ENCODE measurements at regions of chr19 and their contacts with region 1.

Region 1: DNA sequence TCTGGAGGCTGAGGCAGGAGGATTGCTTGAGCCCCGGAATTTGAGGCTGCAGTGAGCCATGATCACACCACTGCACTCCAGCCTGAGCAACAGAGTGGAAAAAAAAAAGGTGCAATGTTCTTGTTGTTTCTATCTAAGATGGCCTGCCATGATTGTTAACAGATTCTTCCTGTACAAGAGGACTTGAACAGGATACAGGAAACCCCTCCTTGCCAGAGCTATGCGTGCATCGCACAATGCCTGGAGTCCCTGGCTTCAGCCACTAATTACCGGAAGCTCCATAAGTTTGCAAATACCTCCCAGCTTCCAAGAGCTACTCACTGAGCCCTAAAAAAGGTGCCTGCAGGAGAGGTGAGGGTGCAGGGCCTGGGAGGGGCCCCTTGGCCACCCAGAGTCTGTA is 13.1 kb upstream of the HIF3A start:
- DNase-seq: no peak
- H3K4me3 ChIP-seq: no peak overlapping the region
- H3K27ac ChIP-seq: peak overlapping the region in 2 of 4 donors; percentile 51 to 55
- H3K4me1 ChIP-seq: peaks cover 0 to 4% (median under 1%) of the 10 kb centered on the region in 4 donors
- H3K27me3 ChIP-seq: no peaks in the 10 kb centered on the region
- CTCF ChIP-seq: no peak
- EP300 ChIP-seq: no peak
- POLR2A ChIP-seq: no peak

Region 2: DNA sequence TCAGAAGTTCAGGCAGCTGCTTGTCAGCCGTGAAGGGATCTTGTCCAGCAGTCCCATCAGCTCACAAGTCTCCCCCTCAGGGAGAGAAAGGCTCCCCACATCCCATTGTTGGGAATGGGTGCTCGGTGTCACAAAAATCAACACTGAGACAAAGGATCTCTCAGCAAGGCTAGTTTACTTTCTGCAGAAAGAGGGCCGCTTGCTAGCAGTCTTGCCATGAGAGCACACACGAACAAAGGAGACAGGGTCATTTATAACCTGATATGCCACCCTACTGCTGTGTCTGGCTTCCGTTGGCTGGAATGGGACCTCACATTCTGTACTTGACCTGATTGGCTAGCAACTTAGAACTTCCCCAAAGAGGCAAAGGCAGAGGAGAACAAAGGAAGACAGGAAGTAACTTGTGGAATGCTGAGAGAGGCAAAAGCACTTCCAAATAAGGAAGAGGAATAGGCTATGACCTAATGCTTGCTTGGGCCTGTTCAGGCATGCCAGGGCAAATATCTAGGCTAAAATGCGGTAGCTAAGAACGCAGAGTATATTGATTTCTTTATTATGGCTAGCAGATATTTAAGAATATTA is 150.6 kb before region 1 on chr19:
- intact Hi-C with region 1: no loop called
- DNase-seq: no peak
- H3K4me3 ChIP-seq: peak overlapping the region in 1 of 4 donors; percentile 15
- H3K27ac ChIP-seq: peak overlapping the region; percentile 50 to 81 (median 75)
- H3K4me1 ChIP-seq: peaks cover 0 to 26% (median 23%) of the 10 kb centered on the region in 4 donors
- H3K27me3 ChIP-seq: no peaks in the 10 kb centered on the region
- CTCF ChIP-seq: no peak
- EP300 ChIP-seq: no peak
- POLR2A ChIP-seq: no peak

Region 3: GRCh38 chr19:46346821-46347571 is 63.2 kb after region 1 on chr19 and contains the start of gene PPP5C:
- intact Hi-C with region 1: loop called (anchors 2 kb)
- DNase-seq: peak; percentile 96
- H3K4me3 ChIP-seq: peak within 1 kb of the TSS; percentile 73 to 99 (median 96)
- H3K27ac ChIP-seq: peak within 1 kb of the TSS; percentile 81 to 90 (median 88)
- H3K4me1 ChIP-seq: peaks cover 0 to 56% (median 53%) of the 10 kb centered on the region in 4 donors
- H3K27me3 ChIP-seq: no peaks in the 10 kb centered on the region
- CTCF ChIP-seq: peak; percentile 57 to 85 (median 76)
- EP300 ChIP-seq: no peak
- POLR2A ChIP-seq: peak; percentile 37 to 74
- total RNA-seq, gene PPP5C: 37.1 to 61.5 (median 46.5) TPM

Region 4: DNA sequence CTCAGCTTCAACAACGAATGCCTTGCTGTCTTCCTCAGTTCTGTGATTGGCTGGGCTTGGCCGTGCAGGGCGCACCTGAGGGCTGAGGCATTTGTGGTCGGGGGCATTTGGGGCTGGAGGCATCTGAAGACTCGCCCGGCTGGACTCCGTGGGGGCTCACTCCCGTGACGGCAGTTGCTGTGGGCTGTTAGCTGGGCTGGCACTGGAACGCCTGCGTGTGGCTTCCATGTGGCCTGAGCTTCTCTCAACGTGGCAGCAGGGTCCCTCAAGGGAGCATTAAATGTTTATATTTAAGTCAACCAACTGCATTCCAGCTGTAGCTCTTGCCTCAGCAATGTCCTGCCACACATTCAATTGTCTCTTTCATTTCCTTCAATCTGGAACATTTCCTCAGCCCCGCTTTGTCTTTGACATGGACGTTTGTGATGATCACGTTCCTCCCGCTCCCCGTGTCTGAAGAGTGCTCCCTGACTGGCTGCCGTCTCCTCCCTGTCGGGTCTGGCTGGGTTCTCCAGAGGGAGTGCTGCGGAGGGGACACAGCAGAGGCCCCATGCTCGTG is 108.6 kb after region 1 on chr19:
- intact Hi-C with region 1: loop called (anchors 5 kb)
- DNase-seq: peak; percentile 62
- H3K4me3 ChIP-seq: no peak overlapping the region
- H3K27ac ChIP-seq: peak overlapping the region in 1 of 4 donors; percentile 31
- H3K4me1 ChIP-seq: peaks cover 0 to 6% (median 0%) of the 10 kb centered on the region in 4 donors
- H3K27me3 ChIP-seq: no peaks in the 10 kb centered on the region
- CTCF ChIP-seq: no peak
- EP300 ChIP-seq: no peak
- POLR2A ChIP-seq: no peak

Region 5: GRCh38 chr19:46487802-46488445 is 204.2 kb after region 1 on chr19:
- intact Hi-C with region 1: loop called (anchors 5 kb)
- DNase-seq: peak; percentile 90
- H3K4me3 ChIP-seq: peak overlapping the region; percentile 15 to 39 (median 31)
- H3K27ac ChIP-seq: no peak overlapping the region
- H3K4me1 ChIP-seq: peaks cover 0 to 36% (median 33%) of the 10 kb centered on the region in 4 donors
- H3K27me3 ChIP-seq: peaks cover 0 to 63% (median 48%) of the 10 kb centered on the region in 3 donors
- CTCF ChIP-seq: peak; percentile 90 to 99 (median 92)
- EP300 ChIP-seq: no peak
- POLR2A ChIP-seq: no peak

Measured in sigmoid colon (tissue), 7 donors.